Cardiac septum (tissue), 1 donor: ENCODE measurements at regions of chr7 and their contacts with region 1.

Region 1: GRCh38 chr7:123682690-123683089 is 27.0 kb downstream of the LMOD2 start:
- DNase-seq: no peak

Region 2: GRCh38 chr7:123505221-123505620 is 177.5 kb before region 1 on chr7:
- intact Hi-C with region 1: no loop called
- DNase-seq: no peak

Region 3: DNA sequence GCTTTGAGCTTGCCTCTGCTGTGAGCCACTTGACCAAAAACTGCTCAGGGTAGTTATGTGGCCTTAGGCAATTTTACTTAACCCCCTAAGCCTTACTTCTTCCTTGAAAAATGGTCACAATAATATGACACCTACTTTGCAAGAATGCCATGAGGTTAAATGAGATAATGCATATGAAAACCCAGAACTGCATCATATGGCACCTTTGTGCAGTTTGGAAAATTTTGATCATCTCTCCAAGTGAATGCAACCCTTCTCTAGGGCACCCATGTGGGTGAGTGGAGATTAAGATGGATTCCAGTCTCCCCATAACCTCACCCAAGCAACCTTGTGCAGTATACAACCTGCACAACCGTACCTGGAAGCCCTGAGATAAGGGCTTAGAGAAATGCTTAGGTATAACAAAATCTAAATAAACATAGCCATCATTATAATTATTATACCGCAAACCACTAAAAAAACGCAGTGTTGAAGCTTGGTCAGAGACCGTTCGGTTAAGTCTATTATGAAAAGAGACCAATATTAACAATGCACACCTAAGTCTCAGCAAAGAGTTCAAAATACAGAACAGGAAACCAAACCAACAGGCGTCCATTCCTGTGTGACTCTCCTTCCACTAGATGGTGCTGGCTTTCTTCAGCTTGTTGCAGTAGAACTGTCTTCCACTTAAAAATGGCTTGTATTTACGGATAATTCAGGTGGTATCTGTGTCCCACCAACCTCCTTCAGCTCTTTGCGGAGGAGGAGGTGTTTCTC is 102.1 kb before region 1 on chr7:
- intact Hi-C with region 1: loop called (anchors 5 kb)
- DNase-seq: no peak

Region 4: GRCh38 chr7:123624527-123625183 is 58.0 kb before region 1 on chr7:
- intact Hi-C with region 1: no loop called
- DNase-seq: no peak

Region 5: DNA sequence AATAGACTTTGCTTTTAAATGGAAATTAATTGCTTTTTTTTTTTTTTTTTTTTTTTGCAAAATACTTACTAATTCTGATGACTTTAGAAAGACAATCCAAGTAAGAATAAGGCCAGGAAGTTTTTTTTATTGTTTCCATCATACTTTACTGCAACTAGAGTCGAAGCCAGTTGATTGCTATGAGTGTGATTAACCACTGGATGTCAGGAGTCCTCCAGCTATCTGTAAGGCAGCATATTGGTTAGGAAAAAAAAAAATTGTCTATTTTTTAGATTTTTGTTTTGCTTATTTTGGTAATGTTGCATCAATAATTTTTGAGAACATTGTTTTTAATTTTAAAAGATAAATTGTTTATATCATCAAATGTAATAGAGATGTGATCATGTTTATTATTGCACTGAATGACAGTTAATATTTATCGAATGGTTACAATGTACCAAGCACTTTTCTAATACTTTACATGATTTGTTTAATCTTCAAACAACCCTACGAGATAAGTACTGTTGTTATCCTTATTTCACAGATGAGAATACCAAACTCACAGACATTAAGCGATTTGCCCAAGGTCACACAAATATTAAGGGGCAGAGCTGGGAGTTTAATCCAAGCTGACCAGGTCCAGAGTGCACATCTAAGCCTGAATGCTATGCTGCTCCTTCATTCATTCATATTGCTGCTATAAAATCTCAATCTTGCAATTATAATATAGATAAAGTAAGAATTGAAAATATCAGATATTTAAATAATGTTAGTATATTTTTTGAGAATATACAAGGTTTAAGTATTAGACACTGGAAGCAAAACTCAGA is 46.9 kb before region 1 on chr7:
- intact Hi-C with region 1: loop called (anchors 5 kb)
- DNase-seq: no peak

Region 6: GRCh38 chr7:123712619-123713018 is 29.9 kb after region 1 on chr7:
- intact Hi-C with region 1: no loop called
- DNase-seq: no peak

Region 7: GRCh38 chr7:123748734-123749536 is 66.2 kb after region 1 on chr7 and contains the start of gene WASL:
- intact Hi-C with region 1: loop called (anchors 10 kb)
- DNase-seq: peak; percentile 94
- total RNA-seq, gene WASL: 32.5 TPM